ENCODE measurements at regions of chr1 and their contacts with region 1.

Region 1: GRCh38 chr1:47738560-47739182 is 258.5 kb downstream of the TRABD2B start:
- DNase-seq: peak; percentile 65
- H3K4me3 ChIP-seq: no peak overlapping the region
- H3K27ac ChIP-seq: no peak overlapping the region
- H3K4me1 ChIP-seq: no peaks in the 10 kb centered on the region
- H3K27me3 ChIP-seq: no peaks in the 10 kb centered on the region
- CTCF ChIP-seq: peak; percentile 27 to 79 (median 67)
- POLR2A ChIP-seq: no peak

Region 2: GRCh38 chr1:48061162-48062136 is 322.8 kb after region 1 on chr1:
- intact Hi-C with region 1: loop called (anchors 10 kb)
- DNase-seq: peak; percentile 74
- H3K4me3 ChIP-seq: no peak overlapping the region
- H3K27ac ChIP-seq: no peak overlapping the region
- H3K4me1 ChIP-seq: no peaks in the 10 kb centered on the region
- H3K27me3 ChIP-seq: no peaks in the 10 kb centered on the region
- CTCF ChIP-seq: peak in 2 of 3 experiments; percentile 63 to 71
- POLR2A ChIP-seq: no peak